ENCODE measurements at regions of chr12 and their contacts with region 1.

Region 1: DNA sequence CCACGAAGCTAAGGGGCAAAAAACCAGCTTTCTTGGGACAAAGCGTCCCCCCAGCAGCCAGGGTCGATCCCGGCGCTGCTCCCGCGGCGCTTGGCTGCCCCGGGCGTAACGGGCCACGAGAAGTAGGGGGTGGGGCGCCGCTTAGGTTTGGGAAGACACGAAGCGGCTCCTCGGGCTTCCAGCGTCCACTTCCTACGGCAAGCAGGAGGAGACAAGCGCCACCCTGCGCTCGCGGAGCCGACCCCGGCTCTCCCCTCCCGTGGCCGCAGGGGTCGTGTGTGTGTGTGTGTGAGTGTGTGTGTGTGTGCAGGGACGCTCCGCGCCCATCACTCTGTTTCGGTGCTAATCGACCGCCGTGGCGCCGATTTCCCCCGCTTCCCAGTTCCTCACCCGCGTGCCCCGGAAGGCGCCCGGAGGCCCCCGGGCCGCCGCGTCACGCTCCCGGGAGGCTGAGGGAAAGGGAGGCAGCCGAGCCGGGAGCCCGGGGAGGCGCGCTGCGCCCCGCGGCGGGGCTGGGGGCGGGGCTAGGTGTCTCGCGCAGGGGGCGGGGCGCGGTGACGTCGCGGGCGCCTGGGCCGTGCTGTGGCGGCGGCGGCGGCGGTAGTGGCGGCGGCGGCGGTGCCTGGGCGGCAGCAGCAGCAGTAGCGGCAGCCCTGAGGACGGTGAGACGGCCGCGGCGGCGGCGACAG is at the start of gene ERC1:
- DNase-seq: no peak
- ATAC-seq: peak; percentile 94
- H3K4me3 ChIP-seq: peak within 1 kb of the TSS; percentile 87
- H3K27ac ChIP-seq: no peak within 1 kb of the TSS
- H3K4me1 ChIP-seq: no peaks in the 10 kb centered on the region; the same call in 1 of the 2 replicates
- H3K27me3 ChIP-seq: peaks cover 1 to 13% of the 10 kb centered on the region in 2 experiments; a peak in 1 of 4 replicates
- CTCF ChIP-seq: no peak
- EP300 ChIP-seq: no peak
- POLR2A ChIP-seq: peak; percentile 66
- RAD21 ChIP-seq: no peak
- polyA plus RNA-seq, gene ERC1: 0.75 to 1.6 TPM

Region 2: DNA sequence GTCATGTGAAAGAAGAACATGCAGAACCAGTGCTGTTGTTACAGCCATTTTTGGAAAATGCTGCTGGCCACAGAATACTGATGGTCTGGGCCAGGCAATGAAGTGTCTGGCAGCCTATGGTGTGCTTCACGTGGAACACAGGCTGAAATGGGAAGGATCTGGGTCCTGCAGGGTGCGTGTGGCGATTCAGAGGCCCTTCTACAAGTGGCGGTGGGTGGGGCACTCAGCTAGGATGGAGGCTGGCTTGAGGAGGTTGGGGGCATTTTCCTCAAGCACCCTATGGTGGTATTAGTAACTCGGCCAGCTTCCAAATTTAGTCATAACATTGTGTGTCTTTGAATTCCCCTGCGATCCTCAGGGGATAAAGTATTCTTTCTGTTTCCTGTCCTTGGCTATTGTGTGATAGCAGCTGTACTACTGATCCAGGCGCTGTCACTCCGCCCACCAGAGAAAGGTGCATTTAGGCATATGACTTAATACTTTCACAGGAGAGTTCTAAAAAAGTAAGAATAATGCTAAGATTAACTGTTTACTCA is 32.1 kb before region 1 on chr12:
- CTCF ChIA-PET with region 1: interaction called, 4 read pairs
- POLR2A ChIA-PET with region 1: no interaction called
- RAD21 ChIA-PET with region 1: no interaction called
- SMC1A ChIA-PET with region 1: interaction called, 11 read pairs
- in situ Hi-C with region 1: no loop called
- intact Hi-C with region 1: loop called (anchors 2 kb)
- DNase-seq: peak; percentile 61
- ATAC-seq: peak; percentile 93
- H3K4me3 ChIP-seq: no peak overlapping the region
- H3K27ac ChIP-seq: no peak overlapping the region
- H3K4me1 ChIP-seq: peaks cover 4% of the 10 kb centered on the region; the same call in 1 of the 2 replicates
- H3K27me3 ChIP-seq: peaks cover 0 to 8% of the 10 kb centered on the region in 2 experiments; a peak in 1 of 4 replicates
- CTCF ChIP-seq: no peak
- EP300 ChIP-seq: peak; percentile 73 to 78; a peak in 3 of 4 replicates
- POLR2A ChIP-seq: no peak
- RAD21 ChIP-seq: 0 out of 2 replicates have a peak, but pooled peaks have one; percentile 1

Measured in GM12878 (cell line).